ENCODE measurements at regions of chr13 and their contacts with region 1.

Region 1: GRCh38 chr13:43030548-43030947 is 7.2 kb downstream of the DNAJC15 start:
- DNase-seq: peak; percentile 36
- ATAC-seq: peak; percentile 83
- H3K4me3 ChIP-seq: no peak overlapping the region
- H3K27ac ChIP-seq: no peak overlapping the region
- H3K4me1 ChIP-seq: peaks cover 5% of the 10 kb centered on the region; the same call in 1 of the 2 replicates
- H3K27me3 ChIP-seq: no peaks in the 10 kb centered on the region
- CTCF ChIP-seq: no peak
- EP300 ChIP-seq: no peak
- POLR2A ChIP-seq: no peak
- RAD21 ChIP-seq: no peak

Region 2: GRCh38 chr13:41820581-41821237 is 1209.8 kb before region 1 on chr13:
- CTCF ChIA-PET with region 1: no interaction called
- POLR2A ChIA-PET with region 1: no interaction called
- RAD21 ChIA-PET with region 1: no interaction called
- SMC1A ChIA-PET with region 1: no interaction called
- in situ Hi-C with region 1: no loop called
- intact Hi-C with region 1: no loop called
- DNase-seq: no peak
- ATAC-seq: no peak
- H3K4me3 ChIP-seq: no peak overlapping the region
- H3K27ac ChIP-seq: no peak overlapping the region
- H3K4me1 ChIP-seq: no peaks in the 10 kb centered on the region
- H3K27me3 ChIP-seq: no peaks in the 10 kb centered on the region
- CTCF ChIP-seq: no peak
- EP300 ChIP-seq: no peak
- POLR2A ChIP-seq: no peak
- RAD21 ChIP-seq: no peak

Region 3: DNA sequence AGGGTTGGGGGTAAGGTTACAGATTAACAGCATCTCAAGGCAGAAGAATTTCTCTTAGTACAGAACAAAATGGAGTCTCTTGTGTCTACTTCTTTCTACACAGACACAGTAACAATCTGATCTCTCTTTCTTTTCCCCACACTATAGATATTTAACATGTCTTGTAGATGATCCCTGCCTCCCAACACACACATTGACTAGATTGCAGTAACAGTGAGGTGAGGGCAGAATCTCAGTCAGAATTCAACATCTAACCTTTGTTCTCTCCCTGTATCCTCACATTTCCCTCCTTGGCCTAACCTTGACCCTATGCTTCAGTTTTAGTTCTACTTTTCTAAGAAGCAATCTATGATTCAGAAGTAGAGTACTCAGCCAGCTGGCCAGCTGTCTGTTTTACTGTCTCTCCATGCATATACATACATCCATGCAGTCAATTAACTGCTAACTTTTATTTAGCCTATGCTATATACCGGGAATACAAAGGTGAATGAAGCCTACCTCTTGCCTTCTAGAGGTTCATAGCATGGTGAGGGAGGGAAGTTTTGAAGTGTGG is 10.9 kb after region 1 on chr13:
- CTCF ChIA-PET with region 1: interaction called, 6 read pairs
- POLR2A ChIA-PET with region 1: interaction called, 3 read pairs
- RAD21 ChIA-PET with region 1: interaction called, 7 read pairs
- SMC1A ChIA-PET with region 1: interaction called, 20 read pairs
- in situ Hi-C with region 1: no loop called
- intact Hi-C with region 1: no loop called
- DNase-seq: no peak
- ATAC-seq: peak; percentile 65
- H3K4me3 ChIP-seq: no peak overlapping the region
- H3K27ac ChIP-seq: peak overlapping the region; percentile 41
- H3K4me1 ChIP-seq: peaks cover 48% of the 10 kb centered on the region
- H3K27me3 ChIP-seq: no peaks in the 10 kb centered on the region
- CTCF ChIP-seq: no peak
- EP300 ChIP-seq: no peak
- POLR2A ChIP-seq: no peak
- RAD21 ChIP-seq: no peak

Region 4: GRCh38 chr13:43085545-43085944 is 55.0 kb after region 1 on chr13:
- CTCF ChIA-PET with region 1: interaction called, 5 read pairs
- POLR2A ChIA-PET with region 1: no interaction called
- RAD21 ChIA-PET with region 1: no interaction called
- SMC1A ChIA-PET with region 1: interaction called, 12 read pairs
- in situ Hi-C with region 1: no loop called
- intact Hi-C with region 1: no loop called
- DNase-seq: no peak
- ATAC-seq: no peak
- H3K4me3 ChIP-seq: no peak overlapping the region
- H3K27ac ChIP-seq: no peak overlapping the region
- H3K4me1 ChIP-seq: peaks cover 2% of the 10 kb centered on the region; the same call in 1 of the 2 replicates
- H3K27me3 ChIP-seq: no peaks in the 10 kb centered on the region
- CTCF ChIP-seq: peak; percentile 3 to 44 (median 30); a peak in 2 of 6 replicates
- EP300 ChIP-seq: no peak
- POLR2A ChIP-seq: no peak
- RAD21 ChIP-seq: peak; percentile 36; the same call in 1 of the 2 replicates

Region 5: DNA sequence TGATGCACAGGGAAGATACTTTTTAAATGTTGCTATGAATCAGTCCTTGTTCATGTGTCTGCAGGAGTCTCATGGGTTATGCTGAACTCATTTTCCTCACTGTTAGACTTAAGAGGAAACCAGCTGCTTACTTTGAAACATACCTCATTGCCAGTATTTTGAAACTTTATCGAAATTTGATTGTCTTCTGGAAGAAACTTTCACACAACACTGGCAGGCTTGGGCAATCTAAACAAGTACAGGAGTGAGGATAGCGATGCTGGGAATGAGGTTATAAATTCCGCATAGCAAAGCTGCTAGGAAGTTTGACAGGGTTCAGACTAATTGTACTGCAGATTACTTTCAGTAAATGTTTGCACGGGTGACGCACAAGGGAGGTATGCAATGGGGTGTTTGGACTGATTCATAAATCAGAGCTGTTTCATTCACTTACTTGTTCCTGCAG is 238.5 kb after region 1 on chr13:
- CTCF ChIA-PET with region 1: no interaction called
- POLR2A ChIA-PET with region 1: no interaction called
- RAD21 ChIA-PET with region 1: no interaction called
- SMC1A ChIA-PET with region 1: no interaction called
- in situ Hi-C with region 1: no loop called
- intact Hi-C with region 1: no loop called
- DNase-seq: no peak
- ATAC-seq: no peak
- H3K4me3 ChIP-seq: no peak overlapping the region
- H3K27ac ChIP-seq: no peak overlapping the region
- H3K4me1 ChIP-seq: peaks cover 12% of the 10 kb centered on the region
- H3K27me3 ChIP-seq: no peaks in the 10 kb centered on the region
- CTCF ChIP-seq: no peak
- EP300 ChIP-seq: no peak
- POLR2A ChIP-seq: no peak
- RAD21 ChIP-seq: no peak

Measured in GM12878 (cell line).